ENCODE measurements at regions of chr7 and their contacts with region 1.

Region 1: DNA sequence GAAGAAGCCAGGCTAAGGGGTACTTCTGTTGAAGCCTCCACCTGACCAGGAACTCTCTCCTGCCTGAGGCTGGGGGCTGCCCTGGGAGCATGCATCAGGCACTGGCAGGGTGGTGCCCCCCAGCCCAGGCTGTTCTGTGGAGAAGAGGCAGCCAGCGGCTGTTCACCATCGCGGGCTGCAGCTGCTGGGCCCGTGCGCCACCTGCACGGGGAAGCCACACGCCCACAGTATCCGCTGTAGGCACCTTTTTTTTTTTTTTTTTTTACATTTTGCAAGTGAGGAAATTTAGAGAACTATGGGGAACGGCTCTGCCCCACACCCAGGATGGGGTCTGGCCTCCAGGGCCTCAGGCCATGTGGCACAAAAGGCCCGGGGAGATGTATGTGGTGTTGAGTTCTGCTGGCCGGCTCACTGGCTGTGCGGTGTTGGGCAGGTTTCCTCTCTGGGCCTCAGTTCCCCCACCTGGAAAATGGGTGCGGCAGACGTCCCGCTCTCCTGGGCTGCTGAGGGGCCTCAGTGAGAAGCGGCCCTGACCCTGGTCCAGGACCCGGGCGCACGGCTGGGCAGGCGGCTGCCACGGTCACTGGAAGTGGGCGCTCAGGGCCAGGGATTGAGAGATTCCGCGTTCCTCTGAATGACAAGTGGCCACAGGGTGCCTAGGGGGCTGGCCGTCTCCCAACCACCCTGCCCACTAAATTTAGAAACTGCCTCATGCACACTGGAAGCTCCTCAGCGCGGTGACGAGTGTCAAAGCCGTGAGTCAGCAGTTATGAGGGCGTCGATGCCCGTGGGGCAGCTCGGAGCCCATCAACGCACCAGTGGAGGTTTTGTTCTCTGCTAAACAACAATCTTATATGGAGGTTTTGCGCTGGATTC is 8.8 kb upstream of the INTS1 start:
- DNase-seq: peak; percentile 85 to 97
- H3K4me3 ChIP-seq: peak overlapping the region; percentile 32 to 43
- H3K27ac ChIP-seq: peak overlapping the region; percentile 96 to 97
- H3K4me1 ChIP-seq: peaks cover 0 to 28% (median 18%) of the 10 kb centered on the region in 4 donors
- H3K27me3 ChIP-seq: no peaks in the 10 kb centered on the region
- CTCF ChIP-seq: no peak

Region 2: GRCh38 chr7:1028031-1028770 is 484.8 kb before region 1 on chr7:
- intact Hi-C with region 1: no loop called
- DNase-seq: peak; percentile 86 to 95
- H3K4me3 ChIP-seq: peak overlapping the region; percentile 68 to 88
- H3K27ac ChIP-seq: peak overlapping the region; percentile 83 to 93
- H3K4me1 ChIP-seq: peaks cover 0 to 43% (median 31%) of the 10 kb centered on the region in 4 donors
- H3K27me3 ChIP-seq: no peaks in the 10 kb centered on the region
- CTCF ChIP-seq: no peak

Region 3: DNA sequence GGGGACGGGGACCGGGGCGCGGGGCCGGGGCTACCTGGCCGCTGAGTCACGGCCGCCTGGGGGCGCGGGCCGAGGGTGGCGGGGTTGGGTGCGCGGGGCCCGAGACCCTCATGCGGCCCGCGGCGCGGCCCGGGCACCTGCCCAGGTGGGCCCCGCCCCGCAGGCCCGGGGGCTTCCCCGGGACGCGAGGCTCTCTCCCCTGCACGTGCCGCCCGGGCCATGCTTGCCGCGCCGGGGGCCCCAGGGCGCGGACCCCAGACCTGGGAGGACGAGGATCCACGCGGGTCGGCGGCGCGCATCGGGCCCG is 17.9 kb after region 1 on chr7:
- intact Hi-C with region 1: loop called (anchors 1 kb)
- DNase-seq: no peak
- H3K4me3 ChIP-seq: peak overlapping the region; percentile 73 to 81
- H3K27ac ChIP-seq: peak overlapping the region; percentile 99 to 100
- H3K4me1 ChIP-seq: peaks cover 17 to 42% (median 33%) of the 10 kb centered on the region in 4 donors
- H3K27me3 ChIP-seq: no peaks in the 10 kb centered on the region
- CTCF ChIP-seq: no peak

Measured in tibial artery (tissue), 4 donors.